ENCODE measurements at regions of chr3 and their contacts with region 1.

Region 1: GRCh38 chr3:46488735-46489361 is 8.9 kb upstream of the RTP3 start:
- DNase-seq: peak; percentile 95
- CTCF ChIP-seq: peak; percentile 100

Region 2: DNA sequence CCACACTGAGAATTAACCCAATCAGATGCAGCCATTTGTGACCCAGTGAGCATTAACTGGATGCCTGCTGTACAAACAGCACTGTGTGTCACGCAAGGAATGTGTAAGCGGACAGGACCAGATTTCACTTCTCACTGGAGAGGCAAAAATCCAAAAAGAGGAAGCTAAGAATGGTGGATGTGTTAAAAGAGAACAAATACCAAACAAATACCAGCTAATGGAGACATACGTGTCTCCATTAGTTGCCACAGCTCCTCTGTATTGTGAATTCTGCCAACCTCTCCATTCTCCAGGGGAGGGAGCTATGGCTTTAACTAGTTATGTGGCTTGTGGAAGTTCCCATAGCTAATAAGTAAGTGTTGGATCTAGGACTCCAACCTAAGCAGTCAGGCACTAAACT is 26.7 kb before region 1 on chr3:
- CTCF ChIA-PET with region 1: interaction called, 44 read pairs
- POLR2A ChIA-PET with region 1: no interaction called
- DNase-seq: no peak
- CTCF ChIP-seq: no peak

Region 3: DNA sequence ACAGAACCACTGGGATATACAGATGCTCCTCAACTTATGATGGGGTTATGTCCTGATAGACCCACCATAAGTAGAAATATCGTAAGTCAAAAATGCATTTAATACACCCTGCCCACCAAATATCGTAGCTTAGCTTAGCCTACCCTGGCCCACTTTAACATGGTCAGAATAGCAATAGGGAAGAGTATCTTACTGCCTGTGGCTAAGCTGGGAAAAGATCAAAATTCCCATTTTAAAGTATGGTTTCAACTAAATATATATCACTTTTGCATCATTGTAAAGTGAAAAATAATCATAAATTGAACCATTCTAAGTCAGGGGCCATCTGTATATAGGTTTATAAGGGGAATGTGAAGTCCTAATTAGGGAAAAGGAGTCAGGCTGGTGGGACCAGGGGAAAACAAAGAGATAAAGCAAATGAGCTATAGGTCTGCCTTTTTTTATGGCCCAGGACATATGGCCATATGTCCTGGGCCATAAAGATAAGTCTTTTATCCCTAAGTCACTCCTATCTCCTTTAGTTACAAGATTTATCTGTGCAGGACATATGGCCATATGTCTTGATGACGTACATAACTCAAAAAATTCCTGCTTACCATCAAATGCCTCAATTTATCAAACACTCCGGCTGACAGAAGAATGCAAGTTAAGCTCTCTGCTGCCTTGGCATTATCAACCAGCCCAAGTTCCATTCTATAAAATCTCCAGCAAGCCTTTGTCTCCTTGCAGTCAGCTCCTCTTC is 20.2 kb after region 1 on chr3:
- CTCF ChIA-PET with region 1: interaction called, 25 read pairs
- POLR2A ChIA-PET with region 1: no interaction called
- DNase-seq: no peak
- CTCF ChIP-seq: no peak

Region 4: DNA sequence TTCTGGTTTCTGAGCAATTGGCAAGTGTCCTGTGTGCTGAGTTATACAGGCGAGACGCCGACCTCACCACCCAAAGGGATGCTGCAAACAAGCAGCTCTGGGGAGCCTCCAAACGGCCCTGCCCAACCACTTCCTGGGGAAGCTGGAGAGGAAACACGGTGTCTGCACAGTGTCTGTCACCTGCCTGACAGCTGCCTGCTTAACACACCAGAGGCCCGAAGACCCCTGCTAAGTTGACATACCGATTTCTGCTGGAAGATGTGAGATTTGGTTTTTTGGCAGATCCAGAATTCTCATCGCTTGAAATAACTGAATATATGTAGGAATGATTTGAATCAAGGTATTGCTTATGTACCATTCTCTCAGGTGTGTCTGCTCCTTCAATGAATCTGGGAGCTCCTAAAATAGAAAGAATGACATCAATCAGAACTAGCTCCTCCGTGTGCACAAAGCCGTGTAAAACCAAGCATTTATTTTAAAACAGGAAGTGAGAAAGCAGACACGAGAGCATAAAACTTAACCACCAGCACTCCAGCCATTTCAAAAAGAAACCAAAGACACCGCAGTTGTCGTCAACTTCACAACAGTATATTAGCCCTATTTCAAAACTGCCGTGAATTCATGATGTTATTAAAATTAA is 50.1 kb after region 1 on chr3:
- CTCF ChIA-PET with region 1: interaction called, 44 read pairs
- POLR2A ChIA-PET with region 1: no interaction called
- DNase-seq: peak; percentile 75
- CTCF ChIP-seq: no peak

Region 5: DNA sequence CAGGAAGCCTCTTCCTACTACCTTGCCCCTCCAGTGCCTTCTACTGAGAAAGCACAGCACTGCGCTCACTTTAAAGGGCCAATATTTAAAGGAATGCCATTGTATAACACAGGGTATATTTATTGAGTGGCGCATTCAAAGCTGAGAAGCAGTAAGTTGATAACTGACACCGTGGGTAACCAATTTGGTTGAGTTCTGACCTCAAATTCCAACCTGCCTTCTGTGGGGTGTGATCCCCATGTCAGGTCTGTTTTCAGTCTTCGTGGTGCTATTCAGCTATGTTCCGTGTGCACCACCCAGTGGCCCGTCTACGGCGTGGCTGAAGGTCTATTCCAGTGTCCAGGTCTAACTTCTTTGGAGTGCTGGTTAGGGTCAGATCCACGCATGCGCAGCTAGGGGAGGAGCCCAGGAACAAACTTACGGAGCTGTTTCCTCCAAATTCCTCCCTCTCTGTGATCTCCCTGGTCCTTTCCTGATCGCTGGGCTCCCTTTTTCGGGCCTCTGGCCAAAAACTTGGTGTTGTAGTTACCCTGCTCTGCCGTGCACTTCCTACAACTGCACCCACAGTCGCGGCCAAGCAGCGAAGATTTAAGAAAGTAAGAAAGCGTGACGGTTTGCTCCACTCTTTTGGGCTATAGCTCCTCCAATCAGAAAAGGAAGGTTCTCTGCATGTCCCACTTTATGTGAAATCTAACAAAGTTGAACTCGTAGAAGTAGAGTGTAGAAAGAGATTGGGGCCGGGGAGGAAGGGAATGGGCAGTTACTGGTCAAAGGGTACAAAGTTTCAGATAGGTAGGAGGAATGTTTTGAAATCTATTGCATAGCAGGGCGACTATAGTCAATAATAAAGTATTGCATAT is 69.6 kb after region 1 on chr3:
- CTCF ChIA-PET with region 1: interaction called, 134 read pairs
- POLR2A ChIA-PET with region 1: no interaction called
- DNase-seq: peak; percentile 82
- CTCF ChIP-seq: peak; percentile 88

Region 6: GRCh38 chr3:46599590-46599989 is 110.7 kb after region 1 on chr3:
- CTCF ChIA-PET with region 1: interaction called, 17 read pairs
- POLR2A ChIA-PET with region 1: no interaction called
- DNase-seq: no peak
- CTCF ChIP-seq: no peak

Region 7: DNA sequence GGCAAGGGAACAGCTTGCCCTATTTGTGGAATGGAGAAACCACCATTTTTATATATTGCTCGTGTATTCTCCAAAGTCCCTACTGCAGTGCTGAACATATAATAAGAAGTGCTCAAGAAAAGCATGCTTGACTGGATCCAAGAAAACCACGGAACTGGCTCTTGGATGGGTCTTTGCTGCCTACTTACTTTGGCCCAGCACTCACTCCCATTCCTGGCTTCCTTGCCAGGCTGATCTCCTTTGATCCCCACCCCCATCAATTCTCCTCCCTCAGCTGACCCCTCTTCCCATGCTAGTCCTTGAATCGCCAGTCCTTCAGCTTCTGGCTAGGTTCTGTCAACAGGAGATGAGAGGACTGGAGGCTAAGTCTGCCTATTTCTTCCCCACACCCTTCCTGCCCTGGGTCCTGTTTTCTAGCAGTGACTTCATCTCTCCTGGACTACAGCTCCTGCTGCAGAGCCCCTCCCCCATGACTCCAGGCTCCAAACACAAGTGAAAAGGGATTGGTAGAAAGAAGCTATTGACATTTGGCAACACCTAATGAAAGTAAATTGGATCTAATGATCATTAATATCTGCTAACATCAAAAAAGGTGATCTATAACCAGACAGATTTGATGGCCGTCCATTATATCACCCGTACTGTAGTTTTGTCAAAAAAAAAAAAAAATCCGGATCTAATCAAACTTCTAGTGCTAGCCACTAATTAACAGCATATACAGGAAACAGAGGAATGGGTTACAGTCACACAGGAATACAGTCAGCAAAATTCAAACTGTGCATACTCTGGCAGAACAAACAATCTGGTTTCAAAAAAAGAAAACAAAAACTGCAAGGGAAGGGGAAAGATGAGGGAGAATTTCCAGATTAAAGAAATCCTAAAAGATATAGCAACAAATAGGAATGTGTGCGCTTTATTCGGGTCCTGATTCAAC is 131.3 kb after region 1 on chr3:
- CTCF ChIA-PET with region 1: interaction called, 18 read pairs
- POLR2A ChIA-PET with region 1: no interaction called
- DNase-seq: no peak
- CTCF ChIP-seq: no peak